ENCODE measurements at regions of chr17 and their contacts with region 1.

Region 1: DNA sequence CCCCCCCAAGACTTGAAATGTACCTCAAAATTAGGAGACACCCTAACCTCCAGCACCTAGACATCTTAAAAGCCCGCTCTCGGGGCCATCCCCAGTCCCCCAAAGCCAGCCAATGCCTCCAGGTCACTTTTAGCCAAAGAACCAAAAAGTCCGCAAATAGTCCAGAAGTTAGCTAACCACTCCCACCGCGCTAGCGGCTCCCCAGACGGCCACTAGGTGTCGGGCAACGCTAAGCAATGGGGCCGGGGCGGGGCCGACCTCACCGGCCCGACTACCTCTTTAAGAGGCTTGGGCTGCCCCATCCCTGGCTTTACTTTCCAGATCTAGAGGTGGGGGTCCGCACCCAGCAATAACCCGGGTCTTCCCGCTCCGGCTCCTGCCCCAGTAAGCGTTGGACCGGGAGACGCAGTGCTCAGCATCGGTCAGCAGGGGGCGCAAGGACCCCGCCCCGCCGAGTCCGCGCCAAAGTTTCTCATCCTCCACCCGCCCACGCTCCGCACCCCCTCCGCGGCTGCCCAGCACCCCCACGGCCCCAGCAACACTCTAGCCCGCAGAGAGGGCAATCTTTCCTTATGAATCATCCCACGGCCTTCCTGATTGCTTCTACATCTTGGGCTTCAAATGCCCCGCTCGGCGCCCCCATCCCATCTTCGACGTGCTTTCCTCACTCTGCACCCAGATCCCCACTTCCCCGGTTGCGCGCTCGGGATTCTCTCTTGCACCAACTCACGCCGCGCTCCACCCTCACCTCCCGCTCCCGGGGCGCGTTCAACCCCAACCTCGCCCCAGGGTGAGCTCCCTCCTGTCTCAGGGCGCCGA is 765 bp downstream of the COL1A1 start:
- DNase-seq: peak; percentile 94 to 98
- ATAC-seq: peak; percentile 91
- H3K4me3 ChIP-seq: peak overlapping the region; percentile 24 to 56
- H3K27ac ChIP-seq: peak overlapping the region; percentile 71 to 87
- H3K4me1 ChIP-seq: no peaks in the 10 kb centered on the region
- H3K27me3 ChIP-seq: no peaks in the 10 kb centered on the region

Region 2: DNA sequence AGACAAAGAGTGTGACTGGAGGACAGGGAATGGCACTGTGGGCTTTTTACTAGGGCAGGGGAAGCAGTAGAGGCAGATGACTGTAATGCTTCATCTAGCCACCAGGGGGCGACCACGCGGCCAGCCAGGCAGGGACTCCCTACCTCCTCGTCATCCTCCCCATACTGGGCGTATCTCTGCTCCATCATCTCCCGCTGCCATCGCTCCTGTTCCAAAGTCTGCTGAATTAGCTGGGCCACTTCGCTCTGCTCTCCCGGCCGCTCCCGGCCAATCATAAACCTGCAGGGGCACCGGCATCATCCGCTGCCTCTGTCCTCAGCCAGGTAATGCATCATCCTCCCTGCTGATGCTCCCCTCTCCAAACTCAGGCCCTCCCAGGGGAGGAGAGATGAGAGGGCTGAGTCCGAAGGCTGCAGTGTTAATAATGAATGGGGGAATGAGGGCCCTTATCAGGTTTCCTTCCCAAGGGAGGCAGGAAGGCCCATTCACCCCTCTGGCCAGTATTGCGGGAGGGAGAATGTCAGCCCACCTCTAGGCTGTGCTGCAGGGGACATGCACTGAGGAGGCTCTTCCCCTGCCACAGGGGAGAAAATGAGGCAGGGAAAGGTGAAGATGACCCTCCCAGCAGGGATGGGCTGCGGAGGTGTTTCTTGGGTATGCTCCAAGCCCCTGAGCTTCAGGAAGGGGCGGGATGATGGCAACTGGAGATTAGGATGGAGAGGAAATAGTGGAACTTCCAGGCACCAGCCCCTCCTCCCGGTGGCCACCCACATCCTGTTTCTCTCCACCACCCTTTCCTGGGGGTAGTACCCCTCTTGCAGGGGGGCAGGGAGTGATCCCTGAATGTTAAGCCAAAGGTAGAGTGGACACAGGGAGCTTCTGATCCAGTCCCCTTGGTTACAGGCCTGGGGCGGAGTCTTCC is 60.5 kb before region 1 on chr17:
- intact Hi-C with region 1: loop called in 1 of 2 experiments (anchors 10 kb)
- DNase-seq: peak; percentile 86 to 94
- ATAC-seq: peak; percentile 91
- H3K4me3 ChIP-seq: no peak overlapping the region
- H3K27ac ChIP-seq: peak overlapping the region in 1 of 2 donors; percentile 14
- H3K4me1 ChIP-seq: no peaks in the 10 kb centered on the region
- H3K27me3 ChIP-seq: no peaks in the 10 kb centered on the region

Region 3: DNA sequence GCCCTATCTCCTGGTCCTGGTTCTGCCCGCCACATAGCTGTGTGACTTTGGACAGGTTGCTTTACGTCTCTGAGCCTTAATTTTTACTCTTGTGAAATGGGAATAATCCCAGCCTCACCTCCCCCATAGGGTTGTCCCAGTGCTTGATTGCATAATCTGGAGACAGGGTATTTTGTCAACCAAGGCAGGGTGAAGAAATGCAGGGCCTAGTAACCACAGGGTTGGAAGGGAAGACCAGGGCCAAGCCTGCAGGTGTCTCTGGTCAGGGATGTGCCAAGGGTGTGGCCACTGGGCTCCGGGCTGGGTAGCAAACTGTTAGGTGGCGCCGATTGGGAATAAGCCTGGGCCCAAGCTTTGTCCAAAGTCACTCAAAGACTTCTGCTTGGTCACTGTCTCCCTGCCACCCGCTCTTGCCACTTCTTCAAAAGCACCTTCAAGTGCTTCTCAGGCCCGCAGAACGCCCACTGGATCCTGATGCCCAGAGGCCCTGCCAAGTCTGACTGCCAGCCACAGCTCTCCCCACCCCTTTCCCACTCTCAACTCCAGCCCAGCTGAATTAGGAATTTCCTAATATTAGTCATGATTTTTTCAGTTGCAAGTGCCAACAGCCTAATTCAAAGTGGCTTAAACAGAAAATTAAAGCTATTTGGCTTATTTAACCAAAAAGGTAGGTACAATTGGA is 21.3 kb after region 1 on chr17:
- intact Hi-C with region 1: loop called in 1 of 2 experiments (anchors 2 kb)
- DNase-seq: peak; percentile 88 to 92
- ATAC-seq: peak; percentile 89
- H3K4me3 ChIP-seq: no peak overlapping the region
- H3K27ac ChIP-seq: peak overlapping the region; percentile 71 to 99
- H3K4me1 ChIP-seq: peaks cover 6 to 9% of the 10 kb centered on the region in 2 donors
- H3K27me3 ChIP-seq: no peaks in the 10 kb centered on the region

Region 4: DNA sequence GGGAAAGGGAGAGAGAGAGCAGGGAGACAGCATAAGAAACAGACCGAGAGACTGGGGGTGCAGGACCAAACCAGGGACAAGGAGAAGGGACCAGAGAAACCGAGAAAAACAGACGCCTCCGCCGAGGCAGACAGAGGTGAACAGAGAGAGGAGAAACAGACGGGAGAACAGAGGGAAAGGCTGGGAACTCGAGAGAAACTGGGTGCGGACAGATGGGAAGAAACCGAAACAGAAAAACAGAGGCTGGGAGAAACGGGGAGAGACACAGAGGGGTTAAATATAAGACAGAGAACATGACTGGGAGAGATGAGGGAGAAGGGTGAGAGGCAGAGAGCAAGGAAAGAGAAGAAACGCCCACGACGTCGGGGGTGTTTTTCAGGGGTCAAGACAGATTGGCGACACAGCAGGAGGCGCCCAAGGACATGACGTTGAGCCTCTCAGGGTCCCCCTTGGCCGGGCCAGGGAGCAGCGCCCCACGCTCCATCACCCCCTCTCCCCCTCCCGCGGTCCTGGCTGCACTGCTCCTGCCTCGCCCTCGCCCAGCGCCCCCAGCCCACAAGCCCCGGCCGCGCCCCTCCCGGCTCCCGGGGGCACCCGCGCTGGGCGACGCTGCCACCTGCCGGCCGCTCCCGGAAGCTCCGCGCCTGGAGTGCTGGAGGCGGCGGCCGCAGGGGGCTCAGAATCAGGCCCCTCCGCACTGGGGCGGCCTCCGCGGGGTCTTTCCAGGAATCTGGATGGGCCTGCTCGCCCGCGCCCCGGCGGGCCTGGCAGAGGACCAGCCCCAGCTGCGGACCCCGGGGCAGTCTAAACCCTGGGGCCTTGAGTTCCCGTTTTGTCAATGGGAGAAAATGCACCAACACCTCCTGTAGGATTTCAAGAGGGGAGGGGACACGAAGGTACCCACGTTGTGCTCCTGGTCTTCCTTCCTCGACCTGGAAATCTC is 72.3 kb after region 1 on chr17:
- intact Hi-C with region 1: loop called (anchors 1 to 2 kb)
- DNase-seq: peak; percentile 74 to 89
- ATAC-seq: peak; percentile 78
- H3K4me3 ChIP-seq: peak overlapping the region; percentile 10 to 51
- H3K27ac ChIP-seq: peak overlapping the region in 1 of 2 donors; percentile 32
- H3K4me1 ChIP-seq: no peaks in the 10 kb centered on the region
- H3K27me3 ChIP-seq: no peaks in the 10 kb centered on the region

Region 5: GRCh38 chr17:50297407-50297865 is 96.8 kb after region 1 on chr17:
- intact Hi-C with region 1: loop called (anchors 1 to 2 kb)
- DNase-seq: peak; percentile 80 to 92
- ATAC-seq: peak; percentile 91
- H3K4me3 ChIP-seq: no peak overlapping the region
- H3K27ac ChIP-seq: no peak overlapping the region
- H3K4me1 ChIP-seq: no peaks in the 10 kb centered on the region
- H3K27me3 ChIP-seq: no peaks in the 10 kb centered on the region